ENCODE measurements at regions of chr11 and their contacts with region 1.

Region 1: DNA sequence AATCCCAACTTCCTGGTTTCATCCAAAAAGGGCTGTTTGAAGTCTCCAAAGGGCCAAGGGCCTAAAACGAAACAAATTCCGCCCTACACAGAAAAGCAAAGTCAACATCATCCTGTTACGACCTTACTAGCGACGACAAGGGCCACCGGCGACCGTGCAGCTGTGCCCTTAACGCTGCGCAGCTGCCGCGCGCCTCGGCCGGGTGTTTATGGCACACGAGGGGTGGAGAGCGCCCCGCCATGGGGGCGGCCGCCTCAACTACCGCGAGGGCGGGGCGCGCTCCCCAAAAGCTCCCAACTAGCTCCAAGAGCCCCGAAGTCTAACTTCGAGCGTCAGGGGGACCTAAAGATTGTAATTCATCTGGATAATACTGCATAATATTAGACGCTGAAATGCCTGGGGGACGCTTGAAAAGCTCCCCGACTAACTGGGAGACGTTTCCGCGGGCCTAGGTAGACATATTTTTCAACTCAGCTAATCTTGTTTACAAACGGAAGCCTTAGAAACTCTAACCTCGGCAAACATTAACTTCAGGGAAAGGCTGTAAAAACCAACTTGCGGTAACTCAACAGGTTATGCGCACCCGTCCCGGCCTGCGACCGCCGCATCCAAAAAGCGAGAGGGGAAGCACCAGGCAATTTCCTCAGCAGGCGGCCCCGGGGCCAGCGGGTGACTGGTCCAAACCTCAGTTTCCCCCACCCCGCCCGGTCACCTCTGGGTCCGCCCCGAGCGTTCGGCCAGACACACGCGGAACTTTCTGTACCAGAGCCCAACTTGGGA is 694 bp downstream of the TMEM123 start:
- DNase-seq: peak; percentile 88
- ATAC-seq: peak; percentile 58
- H3K4me3 ChIP-seq: peak overlapping the region; percentile 83 to 98 (median 91)
- H3K4me3 Mint-ChIP-seq: peak overlapping the region; percentile 98
- H3K27ac ChIP-seq: peak overlapping the region; percentile 82 to 87
- H3K27ac Mint-ChIP-seq: peak overlapping the region; percentile 98
- H3K4me1 ChIP-seq: peaks cover 56 to 59% of the 10 kb centered on the region in 2 donors
- H3K4me1 Mint-ChIP-seq: peaks cover 73% of the 10 kb centered on the region
- H3K27me3 ChIP-seq: no peaks in the 10 kb centered on the region
- H3K27me3 Mint-ChIP-seq: no peaks in the 10 kb centered on the region
- CTCF ChIP-seq: no peak

Region 2: DNA sequence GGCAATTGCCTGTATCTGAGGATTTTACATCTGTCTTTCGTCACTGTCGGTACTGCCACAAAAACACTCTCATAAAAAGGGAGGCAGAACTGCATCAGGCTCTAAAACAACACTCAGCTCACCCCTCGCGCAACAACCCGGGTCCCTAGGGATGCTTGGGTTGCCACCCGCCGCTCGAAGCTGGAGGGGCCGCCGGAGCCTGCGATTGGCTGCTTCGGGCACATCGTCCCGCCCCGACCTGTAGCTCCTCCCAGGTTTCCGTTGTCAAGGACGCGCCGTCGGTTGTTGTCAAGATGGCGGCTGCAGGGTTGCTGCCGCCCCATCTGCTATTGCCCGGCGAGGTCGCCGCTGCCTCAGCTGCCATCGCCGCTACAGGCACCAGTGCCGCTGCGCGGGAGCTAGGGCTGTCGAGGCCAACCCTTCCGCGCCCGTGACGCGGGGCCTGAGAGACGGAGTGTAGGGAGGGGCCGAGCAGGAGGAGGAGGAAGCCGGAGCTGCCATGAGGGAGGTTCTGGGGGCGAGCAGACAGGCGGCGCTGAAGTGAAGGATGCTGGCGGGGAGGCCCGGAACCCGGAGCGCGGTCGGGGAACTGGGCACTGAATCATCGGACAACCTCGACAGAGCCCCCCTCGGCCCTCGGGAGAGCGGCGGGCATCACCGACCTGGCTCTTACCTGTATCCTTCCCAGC is 537.0 kb before region 1 on chr11 and contains the start of gene CEP126:
- CTCF ChIA-PET with region 1: no interaction called
- POLR2A ChIA-PET with region 1: no interaction called
- intact Hi-C with region 1: loop called (anchors 10 kb)
- DNase-seq: peak; percentile 98
- ATAC-seq: peak; percentile 90
- H3K4me3 ChIP-seq: peak within 1 kb of the TSS; percentile 53 to 88 (median 81)
- H3K4me3 Mint-ChIP-seq: peak within 1 kb of the TSS; percentile 96
- H3K27ac ChIP-seq: peak within 1 kb of the TSS; percentile 92 to 99
- H3K27ac Mint-ChIP-seq: peak within 1 kb of the TSS; percentile 97
- H3K4me1 ChIP-seq: peaks cover 18 to 21% of the 10 kb centered on the region in 2 donors
- H3K4me1 Mint-ChIP-seq: peaks cover 23% of the 10 kb centered on the region
- H3K27me3 ChIP-seq: no peaks in the 10 kb centered on the region
- H3K27me3 Mint-ChIP-seq: peaks cover 11% of the 10 kb centered on the region
- CTCF ChIP-seq: peak; percentile 23
- total RNA-seq, gene CEP126: 9.1 and 9.4 TPM in 2 replicates

Region 3: GRCh38 chr11:102346748-102347461 is 105.0 kb before region 1 on chr11 and contains the start of gene BIRC2:
- CTCF ChIA-PET with region 1: interaction called, 7 read pairs
- POLR2A ChIA-PET with region 1: no interaction called
- intact Hi-C with region 1: loop called (anchors 1 kb)
- DNase-seq: peak; percentile 98
- ATAC-seq: peak; percentile 88
- H3K4me3 ChIP-seq: peak within 1 kb of the TSS; percentile 63 to 98 (median 92)
- H3K4me3 Mint-ChIP-seq: peak within 1 kb of the TSS; percentile 90
- H3K27ac ChIP-seq: peak within 1 kb of the TSS; percentile 94 to 97
- H3K27ac Mint-ChIP-seq: peak within 1 kb of the TSS; percentile 98
- H3K4me1 ChIP-seq: peaks cover 14 to 21% of the 10 kb centered on the region in 2 donors
- H3K4me1 Mint-ChIP-seq: peaks cover 36% of the 10 kb centered on the region
- H3K27me3 ChIP-seq: no peaks in the 10 kb centered on the region
- H3K27me3 Mint-ChIP-seq: no peaks in the 10 kb centered on the region
- CTCF ChIP-seq: peak; percentile 73
- total RNA-seq, gene BIRC2: 46.7 and 51.0 TPM in 2 replicates

Region 4: DNA sequence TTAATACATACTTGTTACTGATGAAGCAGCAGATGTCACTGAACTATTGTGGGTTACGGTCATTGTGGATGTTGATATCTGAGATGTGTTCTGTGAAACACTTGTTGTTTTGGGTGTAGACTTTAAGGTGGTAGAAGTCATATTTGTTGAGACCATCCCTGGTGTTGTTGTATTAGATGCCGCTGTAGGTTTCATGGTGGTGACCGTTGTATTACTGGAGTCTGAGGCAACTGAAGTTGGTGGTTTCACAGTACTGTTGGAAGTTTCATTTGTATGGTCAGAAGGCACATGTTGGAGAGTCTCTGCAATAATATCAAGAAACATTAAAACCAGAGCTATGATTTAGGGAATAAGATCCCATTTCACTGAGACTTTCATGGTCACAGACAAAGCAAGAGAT is 50.0 kb before region 1 on chr11:
- CTCF ChIA-PET with region 1: no interaction called
- POLR2A ChIA-PET with region 1: no interaction called
- intact Hi-C with region 1: no loop called
- DNase-seq: no peak
- ATAC-seq: no peak
- H3K4me3 ChIP-seq: no peak overlapping the region
- H3K4me3 Mint-ChIP-seq: no peak overlapping the region
- H3K27ac ChIP-seq: peak overlapping the region in 1 of 2 donors; percentile 59
- H3K27ac Mint-ChIP-seq: no peak overlapping the region
- H3K4me1 ChIP-seq: no peaks in the 10 kb centered on the region
- H3K4me1 Mint-ChIP-seq: peaks cover 18% of the 10 kb centered on the region
- H3K27me3 ChIP-seq: no peaks in the 10 kb centered on the region
- H3K27me3 Mint-ChIP-seq: no peaks in the 10 kb centered on the region
- CTCF ChIP-seq: no peak

Region 5: GRCh38 chr11:102476812-102477211 is 24.9 kb after region 1 on chr11:
- CTCF ChIA-PET with region 1: interaction called, 8 read pairs
- POLR2A ChIA-PET with region 1: interaction called, 8 read pairs
- intact Hi-C with region 1: loop called (anchors 1 kb)
- DNase-seq: no peak
- ATAC-seq: no peak
- H3K4me3 ChIP-seq: no peak overlapping the region
- H3K4me3 Mint-ChIP-seq: peak overlapping the region; percentile 69
- H3K27ac ChIP-seq: no peak overlapping the region
- H3K27ac Mint-ChIP-seq: peak overlapping the region; percentile 76
- H3K4me1 ChIP-seq: peaks cover 28% of the 10 kb centered on the region in 2 donors
- H3K4me1 Mint-ChIP-seq: peaks cover 42% of the 10 kb centered on the region
- H3K27me3 ChIP-seq: peaks cover 0 to 3% (median 0%) of the 10 kb centered on the region in 4 experiments
- H3K27me3 Mint-ChIP-seq: peaks cover 7% of the 10 kb centered on the region
- CTCF ChIP-seq: no peak

Region 6: DNA sequence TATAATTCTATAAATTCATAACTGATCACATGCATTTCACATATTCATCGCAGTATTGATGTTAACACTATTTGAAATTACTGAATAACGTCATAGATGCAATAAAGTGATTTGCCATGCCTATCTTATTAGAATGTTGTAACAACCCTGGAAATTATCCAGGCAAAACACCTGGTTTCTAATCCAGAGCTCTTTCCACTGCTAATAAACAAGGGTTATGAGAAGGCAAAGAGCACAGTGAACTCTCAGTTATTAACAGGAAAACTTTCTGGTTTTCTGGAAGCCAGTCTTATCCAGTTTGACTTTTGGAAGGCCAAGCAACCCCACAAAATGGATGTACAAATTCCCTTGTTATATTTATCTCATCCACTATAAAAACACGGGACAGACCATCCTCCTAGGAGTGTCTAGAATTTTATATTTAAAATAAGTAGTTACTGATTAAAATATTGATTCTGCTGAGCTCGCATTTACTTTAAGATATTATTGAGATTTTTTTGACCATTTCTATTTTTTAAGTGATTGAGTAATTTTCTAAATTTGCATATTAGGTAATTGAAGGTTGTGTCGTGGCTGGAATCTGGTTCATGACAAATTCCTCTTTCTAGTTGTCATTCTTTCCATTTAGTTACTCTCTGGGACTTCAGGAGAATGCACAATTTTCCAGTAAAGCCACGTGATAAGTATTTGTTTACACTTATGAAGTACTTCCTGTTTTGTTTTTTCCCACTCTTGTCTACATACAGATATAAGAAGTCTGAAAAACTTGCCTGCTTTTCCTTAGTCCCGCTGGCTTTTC is 592.2 kb after region 1 on chr11:
- CTCF ChIA-PET with region 1: no interaction called
- POLR2A ChIA-PET with region 1: no interaction called
- intact Hi-C with region 1: no loop called
- DNase-seq: no peak
- ATAC-seq: no peak
- H3K4me3 ChIP-seq: no peak overlapping the region
- H3K4me3 Mint-ChIP-seq: no peak overlapping the region
- H3K27ac ChIP-seq: no peak overlapping the region
- H3K27ac Mint-ChIP-seq: no peak overlapping the region
- H3K4me1 ChIP-seq: no peaks in the 10 kb centered on the region
- H3K4me1 Mint-ChIP-seq: no peaks in the 10 kb centered on the region
- H3K27me3 ChIP-seq: peaks cover 0 to 4% (median 3%) of the 10 kb centered on the region in 4 experiments
- H3K27me3 Mint-ChIP-seq: peaks cover 18% of the 10 kb centered on the region
- CTCF ChIP-seq: no peak

Measured in B cell (primary cell).